Activated T-helper 2 cell treated with anti-CD3 and anti-CD28 coated beads, Interferon-gamma antibody, Interleukin-2, Interleukin-4, amounts not matched to agents 10 μg/mL and 5 μg/mL and 100 μg/mL, durations not matched to agents 14 hours and 24 hours and 36 hours (primary cell): ENCODE measurements at regions of chr10 and their contacts with region 1.

Region 1: GRCh38 chr10:63068246-63068645 is 64.9 kb upstream of the NRBF2 start:
- DNase-seq: no peak
- H3K4me3 Mint-ChIP-seq: no peak overlapping the region
- H3K27ac Mint-ChIP-seq: peak overlapping the region; percentile 75
- H3K4me1 Mint-ChIP-seq: peaks cover 51% of the 10 kb centered on the region
- H3K27me3 Mint-ChIP-seq: peaks cover 3% of the 10 kb centered on the region

Region 2: DNA sequence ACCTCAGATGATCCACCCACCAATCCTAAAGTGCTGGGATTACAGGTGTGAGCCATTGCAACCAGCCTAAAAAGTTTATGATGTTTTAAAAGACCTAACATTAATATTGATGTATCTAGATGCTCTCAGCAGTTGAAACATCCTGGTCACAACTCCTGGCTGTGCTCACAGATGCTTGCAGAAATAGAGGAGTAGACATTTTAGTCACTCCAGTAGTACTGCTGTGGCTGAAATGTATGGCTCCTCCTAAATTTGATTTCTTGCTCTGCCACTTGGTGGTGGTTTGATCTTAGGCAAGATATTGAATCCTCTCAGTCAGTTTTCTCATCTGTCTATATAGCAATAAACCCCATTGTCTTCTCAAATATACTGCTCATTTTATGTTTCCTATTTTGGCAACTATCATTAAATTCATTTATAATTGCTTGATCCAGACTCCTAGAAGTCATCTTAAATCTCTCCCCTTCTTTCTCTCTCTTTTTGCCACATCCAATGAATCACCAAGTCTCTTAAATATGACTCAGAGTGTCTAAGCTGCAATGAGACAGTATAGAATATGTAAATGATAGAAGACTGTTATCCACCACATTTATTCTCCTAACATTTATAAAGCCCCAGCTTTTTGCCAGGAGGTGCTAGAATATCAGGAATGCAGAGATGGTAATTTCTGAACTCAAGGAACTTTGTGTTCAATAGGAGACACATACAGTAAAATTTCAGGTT is 13.2 kb before region 1 on chr10:
- intact Hi-C with region 1: loop called (anchors 1 kb)
- DNase-seq: no peak
- H3K4me3 Mint-ChIP-seq: no peak overlapping the region
- H3K27ac Mint-ChIP-seq: peak overlapping the region; percentile 4
- H3K4me1 Mint-ChIP-seq: peaks cover 16% of the 10 kb centered on the region
- H3K27me3 Mint-ChIP-seq: peaks cover 15% of the 10 kb centered on the region

Region 3: DNA sequence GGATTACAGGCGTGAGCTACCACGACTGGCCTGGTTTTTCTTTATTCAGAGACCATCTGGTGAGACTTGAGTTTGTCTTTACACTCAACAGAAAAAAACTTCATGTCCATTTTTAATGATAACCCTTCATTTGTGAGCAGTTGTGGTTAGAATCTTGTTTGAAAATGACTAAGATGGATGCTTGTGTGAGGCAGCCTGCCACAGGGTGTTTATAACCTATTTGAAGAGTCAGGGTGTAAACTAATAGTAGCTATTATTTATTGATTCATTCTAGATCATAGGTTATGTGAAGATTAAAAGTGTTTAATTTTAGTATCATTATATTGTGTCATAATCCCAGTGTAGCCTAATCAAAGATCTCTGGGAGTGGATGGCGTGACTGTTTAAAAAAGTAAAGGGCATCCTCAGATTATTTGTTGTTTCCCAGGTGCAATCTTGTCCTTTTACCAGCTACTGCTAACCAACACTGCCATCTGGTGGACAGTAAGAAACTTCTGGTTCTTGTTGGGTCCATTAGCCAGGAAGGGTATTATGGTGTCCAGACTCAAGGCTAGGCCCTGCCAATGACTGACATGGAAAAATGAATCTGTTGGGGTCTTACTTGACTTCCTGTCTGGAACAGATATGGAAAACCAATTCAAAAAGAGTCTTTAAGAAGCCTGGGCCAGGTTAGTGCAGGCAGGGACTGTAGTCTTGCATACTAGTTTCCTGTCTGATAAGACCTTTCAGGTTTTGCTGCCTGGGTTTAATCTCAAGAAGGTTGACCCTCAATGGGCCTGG is 89.8 kb after region 1 on chr10:
- intact Hi-C with region 1: no loop called
- DNase-seq: peak; percentile 25
- H3K4me3 Mint-ChIP-seq: no peak overlapping the region
- H3K27ac Mint-ChIP-seq: no peak overlapping the region
- H3K4me1 Mint-ChIP-seq: peaks cover 27% of the 10 kb centered on the region
- H3K27me3 Mint-ChIP-seq: no peaks in the 10 kb centered on the region